ENCODE measurements at regions of chr3 and their contacts with region 1.

Region 1: GRCh38 chr3:194671900-194672808 is at the start of gene LSG1:
- DNase-seq: peak; percentile 98
- total RNA-seq, gene LSG1: 20.7 to 28.5 TPM

Region 2: GRCh38 chr3:195522254-195523023 is 850.3 kb after region 1 on chr3:
- intact Hi-C with region 1: loop called in 1 of 2 experiments (anchors 10 kb)
- DNase-seq: no peak

Measured in posterior vena cava (tissue), 2 donors.